ENCODE measurements at regions of chr2 and their contacts with region 1.

Region 1: GRCh38 chr2:67463810-67464209 is 66.7 kb downstream of the ETAA1 start:
- DNase-seq: no peak
- H3K4me3 ChIP-seq: no peak overlapping the region
- H3K27ac ChIP-seq: no peak overlapping the region; a peak in 1 of 4 replicates
- H3K4me1 ChIP-seq: peaks cover 4 to 8% of the 10 kb centered on the region in 2 experiments; a peak in 2 of 4 replicates
- H3K27me3 ChIP-seq: no peaks in the 10 kb centered on the region
- CTCF ChIP-seq: no peak
- EP300 ChIP-seq: no peak
- RAD21 ChIP-seq: no peak

Region 2: GRCh38 chr2:67476809-67477790 is 13.3 kb after region 1 on chr2:
- CTCF ChIA-PET with region 1: interaction called, 19 read pairs
- POLR2A ChIA-PET with region 1: no interaction called
- DNase-seq: peak; percentile 33
- H3K4me3 ChIP-seq: no peak overlapping the region
- H3K27ac ChIP-seq: peak overlapping the region in 1 of 2 experiments; percentile 22; a peak in 1 of 4 replicates
- H3K4me1 ChIP-seq: no peaks in the 10 kb centered on the region; a peak in 2 of 4 replicates
- H3K27me3 ChIP-seq: no peaks in the 10 kb centered on the region
- CTCF ChIP-seq: peak; percentile 73
- EP300 ChIP-seq: no peak
- RAD21 ChIP-seq: peak; percentile 84

Region 3: DNA sequence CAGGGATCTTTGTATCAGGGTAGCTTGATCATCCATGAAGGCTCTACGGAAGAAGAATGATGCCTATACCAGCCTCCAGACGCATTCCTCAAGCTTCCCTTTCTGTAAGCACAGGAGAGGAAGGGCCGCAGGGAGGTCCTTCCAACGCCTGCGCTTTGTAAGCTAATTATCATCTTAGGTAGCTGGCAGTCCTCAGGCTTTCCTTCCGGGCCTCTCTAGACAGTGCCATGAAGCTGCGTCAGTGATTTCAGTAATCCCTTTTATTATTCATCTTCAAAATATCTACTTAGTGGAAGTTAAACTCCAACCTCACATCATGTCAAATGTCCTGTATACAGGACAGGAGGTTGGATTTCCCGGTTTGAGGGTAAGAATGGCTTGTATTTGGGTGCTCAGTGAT is 25.6 kb after region 1 on chr2:
- CTCF ChIA-PET with region 1: no interaction called
- POLR2A ChIA-PET with region 1: no interaction called
- DNase-seq: no peak
- H3K4me3 ChIP-seq: no peak overlapping the region
- H3K27ac ChIP-seq: no peak overlapping the region
- H3K4me1 ChIP-seq: no peaks in the 10 kb centered on the region
- H3K27me3 ChIP-seq: no peaks in the 10 kb centered on the region
- CTCF ChIP-seq: no peak
- EP300 ChIP-seq: no peak
- RAD21 ChIP-seq: no peak